AG04450 (cell line): ENCODE measurements at regions of chr2 and their contacts with region 1.

Region 1: GRCh38 chr2:27303093-27304025 is 4.9 kb downstream of the UCN start:
- DNase-seq: no peak
- H3K4me3 ChIP-seq: no peak overlapping the region
- H3K27ac ChIP-seq: no peak overlapping the region
- H3K27me3 ChIP-seq: peaks cover 33% of the 10 kb centered on the region
- CTCF ChIP-seq: peak; percentile 89

Region 2: DNA sequence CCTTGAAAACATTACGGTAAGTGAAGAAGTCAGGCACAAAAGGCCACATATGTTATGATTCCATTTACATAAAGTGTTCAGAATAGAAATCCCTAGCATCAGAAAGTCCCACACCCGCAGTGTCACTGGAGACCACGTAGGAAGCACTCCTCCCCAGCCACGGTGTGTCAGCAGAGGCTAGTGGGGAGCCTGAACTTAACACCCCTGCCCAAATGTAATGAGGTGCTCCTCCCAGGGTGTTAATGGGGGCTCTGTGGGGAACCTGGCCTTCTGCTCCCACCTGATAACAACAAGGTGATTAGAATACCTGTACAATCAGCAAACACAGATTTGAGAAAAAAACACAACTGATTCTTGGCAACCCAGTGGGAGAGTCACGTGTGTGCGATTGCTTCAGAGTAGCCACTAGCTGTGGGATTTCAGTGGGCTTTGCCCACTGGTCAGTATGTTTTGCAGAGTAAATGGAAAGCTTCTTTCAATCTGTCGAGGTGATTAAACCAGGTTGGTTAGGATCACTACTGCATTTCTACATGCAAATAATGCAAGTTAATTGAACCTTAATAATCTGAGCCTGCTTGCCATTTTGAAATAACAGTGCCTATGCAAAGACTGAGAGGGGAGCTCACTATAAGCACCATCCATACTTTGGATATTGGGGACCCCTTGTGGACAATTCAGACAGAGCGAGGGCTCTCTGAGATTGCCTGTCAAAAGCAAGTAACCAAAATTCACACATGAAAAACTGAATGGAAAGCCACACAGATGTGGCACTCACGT is 112.1 kb before region 1 on chr2:
- CTCF ChIA-PET with region 1: interaction called, 14 read pairs
- POLR2A ChIA-PET with region 1: no interaction called
- DNase-seq: peak; percentile 41
- H3K4me3 ChIP-seq: no peak overlapping the region
- H3K27ac ChIP-seq: no peak overlapping the region
- H3K27me3 ChIP-seq: peaks cover 5% of the 10 kb centered on the region
- CTCF ChIP-seq: peak; percentile 92

Region 3: DNA sequence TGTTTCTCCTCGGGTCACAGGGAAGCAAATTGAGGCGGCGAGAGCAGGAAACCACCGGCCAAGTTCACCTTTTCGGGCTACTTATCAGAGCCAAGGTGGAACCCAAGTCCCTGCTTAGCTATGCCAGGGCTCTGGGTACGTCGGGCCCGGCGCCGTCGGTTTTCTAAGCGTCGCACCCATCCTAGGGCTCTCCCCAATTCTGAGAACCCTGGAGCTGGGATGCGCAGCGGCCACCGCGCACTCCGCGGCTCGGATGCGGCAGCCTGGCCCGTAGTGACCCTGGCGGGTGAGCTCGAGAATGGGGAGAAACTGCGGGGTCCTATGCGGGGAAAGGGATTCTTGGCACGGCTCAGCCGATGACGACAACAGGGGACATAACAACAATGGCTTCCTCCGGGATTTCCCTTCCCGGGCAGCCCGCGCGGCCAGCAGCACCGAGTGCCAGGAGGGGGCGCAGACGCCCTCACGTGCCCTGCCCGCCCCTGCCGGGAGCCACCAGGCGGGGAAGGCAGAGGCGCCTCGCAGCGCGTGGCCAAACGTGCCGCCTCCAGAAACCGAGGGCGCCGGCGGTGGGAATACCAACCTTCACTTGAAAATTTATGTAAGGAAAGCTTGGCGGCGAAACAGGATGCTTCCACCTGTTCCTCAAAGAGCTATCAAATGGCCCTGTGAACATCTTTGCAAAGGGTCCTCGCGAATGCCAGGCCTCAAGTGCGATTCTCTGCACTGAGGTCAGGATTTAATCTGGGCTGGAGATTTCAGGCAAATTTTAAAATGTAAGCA is 38.4 kb before region 1 on chr2:
- CTCF ChIA-PET with region 1: interaction called, 24 read pairs
- POLR2A ChIA-PET with region 1: no interaction called
- DNase-seq: no peak
- H3K4me3 ChIP-seq: peak overlapping the region; percentile 45
- H3K27ac ChIP-seq: no peak overlapping the region
- H3K27me3 ChIP-seq: peaks cover 69% of the 10 kb centered on the region
- CTCF ChIP-seq: peak; percentile 60

Region 4: GRCh38 chr2:27291865-27292264 is 11.5 kb before region 1 on chr2:
- CTCF ChIA-PET with region 1: interaction called, 34 read pairs
- POLR2A ChIA-PET with region 1: interaction called, 18 read pairs
- DNase-seq: no peak
- H3K4me3 ChIP-seq: no peak overlapping the region
- H3K27ac ChIP-seq: no peak overlapping the region
- H3K27me3 ChIP-seq: peaks cover 14% of the 10 kb centered on the region
- CTCF ChIP-seq: no peak

Region 5: DNA sequence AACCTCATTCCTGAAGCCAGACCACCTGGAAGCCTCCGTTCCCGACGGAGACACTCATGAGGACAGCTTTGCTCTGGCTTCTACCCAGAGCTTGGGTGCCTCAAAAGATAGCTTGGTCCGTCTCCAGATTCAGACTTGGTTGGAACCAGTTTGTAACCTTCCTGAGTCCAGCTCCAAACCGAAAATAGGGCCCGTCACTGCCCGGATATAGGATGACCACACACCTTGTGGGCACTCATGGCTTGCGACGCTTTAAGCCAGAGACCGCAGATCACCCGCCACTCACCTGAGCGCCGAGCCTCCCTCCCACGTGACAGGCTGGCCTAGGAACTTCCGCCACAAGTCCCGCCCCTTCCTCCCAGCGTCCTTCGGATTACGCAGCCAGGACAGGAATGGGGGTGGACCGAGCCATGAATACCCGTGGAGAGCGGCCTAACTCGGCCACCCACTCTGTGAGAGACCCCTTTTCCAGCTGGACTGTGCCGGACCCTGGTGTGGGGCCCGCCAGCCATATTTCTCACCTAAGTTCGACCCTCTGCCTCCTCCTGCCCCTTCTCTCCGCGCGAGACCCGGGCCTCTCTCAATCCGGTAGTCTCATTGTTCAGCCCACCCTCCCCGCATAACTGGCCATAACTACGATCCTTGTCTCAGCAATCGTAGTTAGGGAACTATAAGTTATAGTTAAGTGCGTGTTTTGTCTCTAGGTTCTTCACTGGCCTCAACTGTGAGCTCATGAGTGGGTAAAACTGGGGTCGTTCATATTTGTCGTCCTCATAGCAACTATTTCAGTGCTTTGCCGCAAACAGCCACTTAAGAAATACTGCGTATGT is 19.6 kb after region 1 on chr2 and contains the start of gene MPV17:
- CTCF ChIA-PET with region 1: interaction called, 19 read pairs
- POLR2A ChIA-PET with region 1: no interaction called
- DNase-seq: peak; percentile 78
- H3K4me3 ChIP-seq: peak within 1 kb of the TSS; percentile 90
- H3K27ac ChIP-seq: peak within 1 kb of the TSS; percentile 95
- H3K27me3 ChIP-seq: no peaks in the 10 kb centered on the region
- CTCF ChIP-seq: no peak
- polyA plus RNA-seq, gene MPV17: 183 and 191 TPM in 2 replicates

Region 6: DNA sequence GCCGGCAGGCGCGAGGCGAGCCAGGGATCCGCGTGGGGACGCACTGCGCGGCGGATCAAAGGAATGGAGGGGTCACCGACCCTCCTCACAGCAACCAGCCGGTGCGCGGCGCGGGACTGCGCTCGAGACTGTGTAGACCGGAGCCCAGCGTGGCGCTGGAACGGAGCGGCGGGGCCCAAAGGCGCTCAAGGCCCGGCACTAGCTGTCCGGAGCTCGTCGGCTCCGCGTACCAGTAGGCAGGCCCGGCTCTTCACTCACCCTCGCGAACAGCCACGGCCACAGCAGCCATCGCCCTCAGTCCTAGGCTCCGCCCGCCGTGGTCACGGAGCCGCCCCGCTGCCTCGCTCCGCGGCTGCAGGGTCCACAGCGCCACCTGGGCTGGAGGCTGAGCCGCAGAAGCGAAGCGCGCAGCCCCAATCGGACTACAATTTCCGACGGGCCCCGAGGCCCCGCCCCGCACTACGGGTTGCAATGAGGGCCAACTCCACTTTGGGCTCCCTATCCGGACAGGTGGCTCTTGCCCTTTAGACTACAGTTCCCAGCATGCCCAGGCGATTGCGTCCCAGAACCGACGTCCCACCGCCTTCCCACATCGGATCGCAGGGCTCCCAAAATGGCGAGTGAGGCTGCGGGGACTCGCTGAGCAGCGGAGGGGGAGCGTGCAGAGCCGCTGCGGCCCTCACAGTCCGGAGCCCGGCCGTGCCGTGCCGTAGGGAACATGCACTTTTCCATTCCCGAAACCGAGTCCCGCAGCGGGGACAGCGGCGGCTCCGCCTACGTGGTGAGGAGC is 66.9 kb after region 1 on chr2 and contains the starts of genes EIF2B4 and SNX17:
- CTCF ChIA-PET with region 1: no interaction called
- POLR2A ChIA-PET with region 1: no interaction called
- DNase-seq: peak; percentile 98
- H3K4me3 ChIP-seq: peak within 1 kb of the TSS; percentile 96
- H3K27ac ChIP-seq: peak within 1 kb of the TSS; percentile 84
- H3K27me3 ChIP-seq: no peaks in the 10 kb centered on the region
- CTCF ChIP-seq: peak; percentile 77
- polyA plus RNA-seq, gene EIF2B4: 43.0 and 52.2 TPM in 2 replicates
- polyA plus RNA-seq, gene SNX17: 123 and 137 TPM in 2 replicates